MCF 10A (cell line): ENCODE measurements at regions of chr2 and their contacts with region 1.

Region 1: GRCh38 chr2:230712443-230713330 is at the start of gene CAB39:
- DNase-seq: peak; percentile 86
- H3K4me3 Mint-ChIP-seq: peak within 1 kb of the TSS; percentile 82
- H3K27ac Mint-ChIP-seq: peak within 1 kb of the TSS; percentile 81
- H3K4me1 Mint-ChIP-seq: peaks cover 22% of the 10 kb centered on the region
- H3K27me3 Mint-ChIP-seq: no peaks in the 10 kb centered on the region
- CTCF ChIP-seq: peak; percentile 43
- total RNA-seq, gene CAB39: 76.9 and 91.7 TPM in 2 replicates

Region 2: GRCh38 chr2:230416061-230416721 is 296.5 kb before region 1 on chr2 and contains the start of gene SP100:
- CTCF ChIA-PET with region 1: no interaction called
- POLR2A ChIA-PET with region 1: interaction called, 21 read pairs
- intact Hi-C with region 1: no loop called
- DNase-seq: peak; percentile 86
- H3K4me3 Mint-ChIP-seq: peak within 1 kb of the TSS; percentile 89
- H3K27ac Mint-ChIP-seq: peak within 1 kb of the TSS; percentile 98
- H3K4me1 Mint-ChIP-seq: peaks cover 46% of the 10 kb centered on the region
- H3K27me3 Mint-ChIP-seq: no peaks in the 10 kb centered on the region
- CTCF ChIP-seq: no peak
- total RNA-seq, gene SP100: 54.5 and 56.9 TPM in 2 replicates

Region 3: DNA sequence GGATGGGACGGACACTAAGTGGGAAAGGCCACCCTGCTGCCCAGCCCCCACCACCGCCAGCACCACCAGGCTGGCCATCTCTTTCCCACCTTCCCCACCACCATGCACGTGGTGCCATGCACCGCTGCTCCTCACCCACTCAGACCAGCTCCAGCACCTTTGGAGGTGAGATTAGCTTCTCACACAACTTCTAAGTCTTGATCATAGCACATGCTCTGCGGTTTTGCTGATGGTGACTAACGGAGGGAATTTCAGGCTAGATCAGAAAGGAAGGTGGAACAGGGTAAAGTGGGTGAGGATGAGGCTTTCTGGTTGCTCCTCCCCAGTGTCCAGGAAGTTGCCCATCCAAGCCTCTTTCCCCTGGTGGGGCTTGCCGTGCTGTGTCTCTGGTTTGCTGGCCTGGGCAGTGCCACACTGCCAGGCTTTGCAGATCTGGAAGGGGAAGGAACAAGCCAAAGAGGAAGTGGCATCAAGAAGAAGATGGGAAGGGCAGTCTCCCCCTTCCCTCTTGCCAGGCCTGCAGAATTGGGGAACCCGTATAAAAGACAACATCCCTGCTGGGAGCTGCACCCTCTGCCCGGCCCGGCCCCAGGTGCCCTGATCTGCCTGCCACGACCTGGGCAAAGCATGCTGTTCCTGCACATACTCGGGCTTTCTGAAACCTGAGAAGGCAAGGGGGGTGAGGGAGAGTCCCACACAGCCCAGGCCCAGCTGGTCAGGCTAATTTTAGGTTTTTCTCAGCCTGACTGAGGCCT is 44.3 kb before region 1 on chr2:
- CTCF ChIA-PET with region 1: no interaction called
- POLR2A ChIA-PET with region 1: interaction called, 24 read pairs
- intact Hi-C with region 1: loop called (anchors 1 kb)
- DNase-seq: peak; percentile 90
- H3K4me3 Mint-ChIP-seq: peak overlapping the region; percentile 16
- H3K27ac Mint-ChIP-seq: peak overlapping the region; percentile 70
- H3K4me1 Mint-ChIP-seq: peaks cover 50% of the 10 kb centered on the region
- H3K27me3 Mint-ChIP-seq: no peaks in the 10 kb centered on the region
- CTCF ChIP-seq: no peak

Region 4: DNA sequence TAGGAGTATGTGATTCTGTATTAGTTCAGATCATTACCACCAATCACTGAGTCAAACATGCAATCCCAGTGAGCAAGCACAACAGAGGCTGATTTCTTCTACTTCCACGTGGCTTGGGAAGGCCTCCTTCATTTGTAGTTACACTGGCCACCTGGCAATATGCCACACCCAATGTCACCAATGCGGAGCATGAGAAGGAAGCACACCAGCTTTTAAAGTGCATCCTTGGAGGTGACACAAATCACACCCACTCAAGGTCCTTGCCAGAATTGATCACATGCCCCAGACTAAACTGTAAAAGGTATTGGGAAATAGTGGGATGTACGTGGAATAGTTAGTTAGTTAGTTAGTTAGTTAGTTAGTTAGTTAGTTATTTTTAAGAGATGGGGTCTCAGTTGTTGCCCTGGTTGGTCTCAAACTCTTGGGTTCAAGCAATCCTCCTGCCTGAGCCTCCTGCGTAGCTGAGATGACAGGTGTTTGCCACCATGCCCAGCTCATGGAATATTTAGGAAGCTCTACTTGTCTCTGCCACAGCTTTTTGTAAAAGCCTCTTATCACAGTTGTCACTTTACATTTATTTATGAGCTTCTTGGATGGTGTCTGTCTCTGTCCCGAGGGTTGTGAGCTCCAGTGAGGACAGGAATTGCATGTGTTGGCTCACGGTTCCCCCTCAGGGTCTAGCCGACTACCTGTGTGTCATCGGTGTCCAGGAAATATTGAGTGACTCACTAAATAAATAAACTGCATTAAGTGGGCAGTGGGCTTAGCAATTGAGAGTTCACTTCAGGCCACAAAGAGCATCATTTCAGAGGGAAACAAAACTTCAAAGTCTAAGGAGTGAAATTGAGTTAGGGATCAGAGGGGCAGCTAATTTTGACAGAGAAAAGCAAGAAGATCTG is 28.2 kb before region 1 on chr2:
- CTCF ChIA-PET with region 1: no interaction called
- POLR2A ChIA-PET with region 1: interaction called, 27 read pairs
- intact Hi-C with region 1: no loop called
- DNase-seq: peak; percentile 91
- H3K4me3 Mint-ChIP-seq: no peak overlapping the region
- H3K27ac Mint-ChIP-seq: peak overlapping the region; percentile 87
- H3K4me1 Mint-ChIP-seq: peaks cover 44% of the 10 kb centered on the region
- H3K27me3 Mint-ChIP-seq: no peaks in the 10 kb centered on the region
- CTCF ChIP-seq: no peak

Region 5: GRCh38 chr2:230751062-230751461 is 38.4 kb after region 1 on chr2:
- CTCF ChIA-PET with region 1: interaction called, 4 read pairs
- POLR2A ChIA-PET with region 1: interaction called, 16 read pairs
- intact Hi-C with region 1: no loop called
- DNase-seq: peak; percentile 48
- H3K4me3 Mint-ChIP-seq: no peak overlapping the region
- H3K27ac Mint-ChIP-seq: peak overlapping the region; percentile 31
- H3K4me1 Mint-ChIP-seq: peaks cover 35% of the 10 kb centered on the region
- H3K27me3 Mint-ChIP-seq: no peaks in the 10 kb centered on the region
- CTCF ChIP-seq: no peak

Region 6: DNA sequence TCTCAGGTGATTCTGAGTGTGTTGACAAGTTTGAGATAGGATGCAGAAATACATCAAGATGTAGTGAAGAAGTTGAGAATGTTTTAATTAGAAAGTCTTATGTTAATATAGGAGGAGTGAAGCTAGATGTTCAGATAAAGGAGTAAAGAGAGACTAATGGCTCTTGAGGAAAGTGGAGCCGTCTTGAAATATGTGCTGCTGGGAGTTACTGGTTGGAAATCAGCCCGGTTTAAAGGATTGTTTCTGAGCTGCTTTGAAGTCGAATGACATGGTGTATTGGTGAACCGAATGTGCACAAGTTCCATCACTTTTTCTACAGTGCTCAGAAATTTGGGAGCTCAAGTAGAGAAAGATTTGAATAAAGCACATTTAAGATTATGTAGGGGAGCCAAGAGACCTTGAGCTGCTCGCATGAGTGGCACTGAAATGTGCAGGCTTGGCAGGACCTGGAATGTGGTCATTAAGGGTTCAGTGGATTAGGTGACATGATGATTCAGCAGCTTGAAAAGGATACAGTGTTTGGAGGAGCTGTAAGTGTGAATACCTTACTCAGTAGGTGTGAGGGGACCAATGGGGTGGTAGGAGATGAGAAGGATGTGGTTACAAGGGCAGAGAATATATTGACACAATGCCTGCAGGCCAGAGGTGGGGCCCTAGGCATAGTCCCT is 68.6 kb after region 1 on chr2:
- CTCF ChIA-PET with region 1: interaction called, 16 read pairs
- POLR2A ChIA-PET with region 1: interaction called, 138 read pairs
- intact Hi-C with region 1: no loop called
- DNase-seq: peak; percentile 70
- H3K4me3 Mint-ChIP-seq: peak overlapping the region; percentile 20
- H3K27ac Mint-ChIP-seq: peak overlapping the region; percentile 82
- H3K4me1 Mint-ChIP-seq: peaks cover 57% of the 10 kb centered on the region
- H3K27me3 Mint-ChIP-seq: no peaks in the 10 kb centered on the region
- CTCF ChIP-seq: no peak

Region 7: GRCh38 chr2:230798769-230799399 is 86.2 kb after region 1 on chr2:
- CTCF ChIA-PET with region 1: interaction called, 21 read pairs
- POLR2A ChIA-PET with region 1: interaction called, 183 read pairs
- intact Hi-C with region 1: loop called (anchors 1 kb)
- DNase-seq: peak; percentile 85
- H3K4me3 Mint-ChIP-seq: no peak overlapping the region
- H3K27ac Mint-ChIP-seq: no peak overlapping the region
- H3K4me1 Mint-ChIP-seq: peaks cover 9% of the 10 kb centered on the region
- H3K27me3 Mint-ChIP-seq: no peaks in the 10 kb centered on the region
- CTCF ChIP-seq: peak; percentile 75

Region 8: GRCh38 chr2:231161877-231162329 is 449.2 kb after region 1 on chr2:
- CTCF ChIA-PET with region 1: no interaction called
- POLR2A ChIA-PET with region 1: no interaction called
- intact Hi-C with region 1: no loop called
- DNase-seq: peak; percentile 54
- H3K4me3 Mint-ChIP-seq: no peak overlapping the region
- H3K27ac Mint-ChIP-seq: peak overlapping the region; percentile 90
- H3K4me1 Mint-ChIP-seq: peaks cover 12% of the 10 kb centered on the region
- H3K27me3 Mint-ChIP-seq: no peaks in the 10 kb centered on the region
- CTCF ChIP-seq: no peak